Ascending aorta (tissue), 2 donors: ENCODE measurements at regions of chr1 and their contacts with region 1.

Region 1: GRCh38 chr1:152189657-152190442 is 30.8 kb upstream of the RPTN start:
- DNase-seq: peak in 1 of 2 donors; percentile 72
- H3K4me3 ChIP-seq: peak overlapping the region; percentile 57 to 74
- H3K27ac ChIP-seq: peak overlapping the region in 1 of 2 donors; percentile 72
- H3K4me1 ChIP-seq: no peaks in the 10 kb centered on the region
- H3K27me3 ChIP-seq: no peaks in the 10 kb centered on the region
- CTCF ChIP-seq: peak; percentile 54 to 66 (median 55)

Region 2: GRCh38 chr1:152141974-152142584 is 47.8 kb before region 1 on chr1:
- intact Hi-C with region 1: loop called (anchors 1 kb)
- DNase-seq: peak in 1 of 2 donors; percentile 74
- H3K4me3 ChIP-seq: no peak overlapping the region
- H3K27ac ChIP-seq: no peak overlapping the region
- H3K4me1 ChIP-seq: no peaks in the 10 kb centered on the region
- H3K27me3 ChIP-seq: no peaks in the 10 kb centered on the region
- CTCF ChIP-seq: peak; percentile 48 to 71 (median 57)

Region 3: GRCh38 chr1:152440635-152441471 is 251.0 kb after region 1 on chr1:
- intact Hi-C with region 1: loop called (anchors 5 kb)
- DNase-seq: peak in 1 of 2 donors; percentile 74
- H3K4me3 ChIP-seq: no peak overlapping the region
- H3K27ac ChIP-seq: no peak overlapping the region
- H3K4me1 ChIP-seq: peaks cover 0 to 8% of the 10 kb centered on the region in 2 donors
- H3K27me3 ChIP-seq: no peaks in the 10 kb centered on the region
- CTCF ChIP-seq: peak; percentile 66 to 68 (median 66)

Region 4: DNA sequence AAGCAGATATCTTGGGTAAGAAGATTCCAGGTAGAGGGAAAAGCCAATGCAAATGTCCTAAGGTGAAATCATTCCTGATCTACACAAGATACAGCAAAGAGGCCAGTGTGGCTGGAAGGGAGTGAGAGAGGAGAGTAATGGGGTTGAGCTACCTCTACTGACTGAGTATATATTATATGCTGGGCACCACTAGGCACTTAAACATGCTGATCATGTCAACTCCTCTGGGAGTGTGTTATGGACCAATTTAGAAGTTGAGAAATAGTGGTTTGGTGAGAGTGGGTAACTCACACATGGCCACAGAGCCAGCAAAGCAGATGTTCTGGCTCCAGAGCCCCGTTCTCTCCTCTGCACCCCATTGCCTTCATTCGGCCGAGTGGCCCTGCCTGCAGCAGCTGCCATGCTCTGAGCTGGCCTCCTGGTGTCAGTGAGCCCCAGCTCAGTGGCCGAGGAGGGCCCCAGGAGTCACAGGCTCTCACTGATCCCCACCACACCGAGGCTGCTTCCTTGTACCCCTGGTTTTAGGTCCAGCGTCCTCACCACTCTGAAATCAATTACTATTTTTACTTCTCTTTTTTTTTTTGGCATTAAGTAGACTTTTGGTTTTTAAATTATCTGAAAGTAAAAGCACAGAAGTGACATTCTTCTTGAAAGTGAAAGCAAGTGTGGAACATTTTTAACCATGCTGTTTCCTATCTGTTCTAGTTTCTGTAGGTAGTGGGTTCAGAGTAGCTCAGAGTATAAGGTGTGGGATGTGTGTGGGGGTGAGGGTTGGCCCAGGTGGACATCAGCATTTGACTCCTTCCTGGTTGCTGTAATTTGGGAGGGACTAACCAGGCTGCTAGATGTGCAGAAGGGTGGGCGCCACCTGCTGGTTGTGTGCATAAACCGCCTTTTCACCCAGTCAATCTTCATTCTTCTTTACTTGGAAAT is 270.0 kb after region 1 on chr1:
- intact Hi-C with region 1: loop called (anchors 2 kb)
- DNase-seq: peak in 1 of 2 donors; percentile 76
- H3K4me3 ChIP-seq: peak overlapping the region in 1 of 2 donors; percentile 16
- H3K27ac ChIP-seq: peak overlapping the region; percentile 4 to 6
- H3K4me1 ChIP-seq: no peaks in the 10 kb centered on the region
- H3K27me3 ChIP-seq: no peaks in the 10 kb centered on the region
- CTCF ChIP-seq: peak; percentile 30 to 78 (median 74)